ENCODE measurements at regions of chr2 and their contacts with region 1.

Region 1: GRCh38 chr2:149017116-149017985 is 21.1 kb upstream of the LYPD6B start:
- DNase-seq: peak; percentile 58 to 77
- ATAC-seq: peak in 3 of 4 donors; percentile 51 to 77 (median 63)
- H3K4me3 ChIP-seq: no peak overlapping the region
- H3K27ac ChIP-seq: no peak overlapping the region
- H3K4me1 ChIP-seq: no peaks in the 10 kb centered on the region
- H3K27me3 ChIP-seq: no peaks in the 10 kb centered on the region
- CTCF ChIP-seq: peak; percentile 82

Region 2: GRCh38 chr2:148948868-148949267 is 68.5 kb before region 1 on chr2:
- intact Hi-C with region 1: no loop called
- DNase-seq: no peak
- ATAC-seq: no peak
- H3K4me3 ChIP-seq: no peak overlapping the region
- H3K27ac ChIP-seq: no peak overlapping the region
- H3K4me1 ChIP-seq: no peaks in the 10 kb centered on the region
- H3K27me3 ChIP-seq: peaks cover 0 to 3% (median 0%) of the 10 kb centered on the region in 3 donors
- CTCF ChIP-seq: no peak

Region 3: DNA sequence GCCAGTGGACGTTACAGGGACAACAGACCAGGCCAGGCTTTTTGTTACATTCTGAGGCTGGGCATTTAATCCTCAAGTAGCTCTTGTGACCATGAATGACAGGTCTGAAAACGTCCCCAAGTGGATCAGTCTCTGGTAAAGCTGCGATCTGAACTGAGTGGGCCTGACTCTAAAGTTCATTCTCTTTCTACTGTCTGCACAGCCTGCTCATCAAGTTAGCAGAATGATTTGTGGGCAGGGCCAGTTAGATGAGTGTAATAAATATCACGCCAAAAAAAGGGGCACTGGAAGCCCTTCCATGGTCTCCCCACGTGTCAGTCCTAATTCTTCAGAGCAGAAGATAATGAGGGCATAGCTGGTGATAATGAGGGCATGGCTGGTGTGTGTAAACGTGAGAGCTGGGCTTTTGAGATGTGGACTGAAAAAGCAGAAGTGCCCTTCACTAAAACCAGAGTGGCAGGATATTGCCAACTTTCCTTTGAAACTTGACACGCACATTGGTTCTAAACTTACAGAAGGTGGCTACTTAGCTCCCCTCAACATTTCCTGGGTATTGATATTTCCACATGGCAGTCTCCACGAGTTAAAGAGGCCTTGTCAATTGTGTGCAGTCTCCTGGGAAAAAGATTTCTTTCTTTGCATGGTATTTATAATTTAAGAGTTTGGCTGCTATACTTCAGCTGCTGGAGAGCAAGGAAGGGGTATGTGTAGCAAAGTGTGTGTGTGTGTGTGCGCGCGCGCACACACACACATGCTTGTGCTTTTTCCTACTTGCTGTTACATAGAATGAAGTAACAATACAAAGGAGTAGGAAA is 51.5 kb before region 1 on chr2:
- intact Hi-C with region 1: no loop called
- DNase-seq: no peak
- ATAC-seq: no peak
- H3K4me3 ChIP-seq: no peak overlapping the region
- H3K27ac ChIP-seq: no peak overlapping the region
- H3K4me1 ChIP-seq: no peaks in the 10 kb centered on the region
- H3K27me3 ChIP-seq: no peaks in the 10 kb centered on the region
- CTCF ChIP-seq: no peak

Region 4: GRCh38 chr2:149038442-149039212 is 21.3 kb after region 1 on chr2 and contains the start of gene LYPD6B:
- intact Hi-C with region 1: no loop called
- DNase-seq: no peak
- ATAC-seq: no peak
- H3K4me3 ChIP-seq: no peak within 1 kb of the TSS
- H3K27ac ChIP-seq: no peak within 1 kb of the TSS
- H3K4me1 ChIP-seq: no peaks in the 10 kb centered on the region
- H3K27me3 ChIP-seq: peaks cover 0 to 44% (median 12%) of the 10 kb centered on the region in 3 donors
- CTCF ChIP-seq: no peak
- total RNA-seq, gene LYPD6B: not detected

Region 5: DNA sequence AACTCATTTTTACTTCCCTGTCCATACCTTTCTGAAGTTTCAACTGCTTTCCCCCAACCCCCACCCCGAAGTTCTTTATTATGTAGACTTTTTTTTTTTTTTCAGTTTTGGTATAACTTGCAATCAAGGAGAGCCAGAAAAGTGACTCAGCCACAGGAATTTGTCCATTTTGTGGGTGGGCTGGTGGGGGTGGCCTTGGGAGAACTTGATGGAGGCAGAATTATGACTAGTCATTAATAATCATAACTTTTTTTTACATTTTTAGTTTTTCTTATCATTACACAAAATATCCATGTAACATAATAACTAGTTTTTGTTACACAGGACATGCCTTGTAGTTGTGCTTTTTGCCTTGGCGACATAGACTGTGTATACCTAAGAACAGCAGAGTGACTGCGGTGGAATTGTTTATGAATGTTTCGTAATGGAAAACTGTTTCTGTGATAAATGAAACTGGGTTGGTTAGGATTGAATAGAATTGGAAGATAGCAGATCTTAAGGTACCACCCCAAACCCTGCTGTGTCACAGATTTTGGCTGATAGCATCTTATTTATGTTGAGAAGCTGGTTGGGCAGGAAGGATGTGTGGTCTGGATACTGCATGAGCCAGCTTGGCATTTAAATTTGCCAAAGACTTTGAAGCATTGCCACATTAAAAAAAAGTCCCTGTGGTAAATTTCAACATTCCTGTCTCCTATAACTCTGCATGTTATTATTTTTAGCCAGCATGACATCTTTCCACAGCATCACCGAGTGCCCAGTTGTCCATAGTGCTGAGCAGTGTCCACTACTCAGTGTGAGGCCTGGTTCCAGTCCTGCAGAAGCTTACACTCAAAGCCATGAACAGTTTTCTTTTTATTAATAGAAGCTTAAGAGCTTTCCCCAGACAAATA is 51.9 kb after region 1 on chr2:
- intact Hi-C with region 1: no loop called
- DNase-seq: no peak
- ATAC-seq: no peak
- H3K4me3 ChIP-seq: no peak overlapping the region
- H3K27ac ChIP-seq: no peak overlapping the region
- H3K4me1 ChIP-seq: no peaks in the 10 kb centered on the region
- H3K27me3 ChIP-seq: no peaks in the 10 kb centered on the region
- CTCF ChIP-seq: no peak

Region 6: GRCh38 chr2:149307014-149307413 is 289.7 kb after region 1 on chr2:
- intact Hi-C with region 1: loop called in 1 of 2 experiments (anchors 10 kb)
- DNase-seq: no peak
- ATAC-seq: no peak
- H3K4me3 ChIP-seq: no peak overlapping the region
- H3K27ac ChIP-seq: no peak overlapping the region
- H3K4me1 ChIP-seq: no peaks in the 10 kb centered on the region
- H3K27me3 ChIP-seq: peaks cover 0 to 4% (median 0%) of the 10 kb centered on the region in 3 donors
- CTCF ChIP-seq: no peak

Region 7: DNA sequence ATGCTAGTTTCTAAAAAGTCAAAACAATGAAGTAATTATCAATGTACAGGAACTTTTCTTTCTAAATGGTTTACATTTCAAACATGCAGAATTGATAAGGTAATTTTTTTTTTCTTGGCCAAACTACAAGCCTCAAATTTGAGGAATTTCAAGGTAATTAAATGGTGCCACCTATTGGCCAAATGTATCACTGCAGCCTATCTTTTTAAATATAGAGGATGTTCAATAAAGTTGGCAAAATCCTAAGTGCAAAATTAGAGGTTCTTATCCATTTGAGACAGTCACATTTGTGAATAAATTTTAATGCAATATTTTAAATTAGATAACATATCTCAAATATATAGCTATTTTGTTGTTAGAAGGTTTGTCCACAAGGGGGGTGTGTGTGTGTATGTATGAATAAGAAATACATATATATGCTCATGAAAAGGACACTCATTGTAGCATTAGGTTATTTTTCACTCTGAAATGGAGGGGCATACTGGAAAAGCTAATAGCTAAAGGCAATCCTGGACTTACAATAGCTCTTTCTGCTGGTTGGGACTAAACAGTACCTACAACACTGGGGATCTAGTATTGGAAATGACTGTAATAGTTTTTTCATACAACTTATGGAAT is 544.1 kb after region 1 on chr2:
- intact Hi-C with region 1: loop called (anchors 2 to 5 kb)
- DNase-seq: no peak
- ATAC-seq: peak in 2 of 4 donors; percentile 46 to 60
- H3K4me3 ChIP-seq: no peak overlapping the region
- H3K27ac ChIP-seq: no peak overlapping the region
- H3K4me1 ChIP-seq: no peaks in the 10 kb centered on the region
- H3K27me3 ChIP-seq: no peaks in the 10 kb centered on the region
- CTCF ChIP-seq: peak; percentile 91

Measured in psoas muscle (tissue), 8 donors.